Ascending aorta (tissue), 2 donors: ENCODE measurements at regions of chr6 and their contacts with region 1.

Region 1: GRCh38 chr6:11575408-11576033 is 38.0 kb downstream of the TMEM170B start:
- DNase-seq: peak in 1 of 2 donors; percentile 74
- H3K4me3 ChIP-seq: peak overlapping the region in 1 of 2 donors; percentile 23
- H3K27ac ChIP-seq: no peak overlapping the region
- H3K4me1 ChIP-seq: no peaks in the 10 kb centered on the region
- H3K27me3 ChIP-seq: no peaks in the 10 kb centered on the region
- CTCF ChIP-seq: peak; percentile 81 to 95 (median 89)

Region 2: DNA sequence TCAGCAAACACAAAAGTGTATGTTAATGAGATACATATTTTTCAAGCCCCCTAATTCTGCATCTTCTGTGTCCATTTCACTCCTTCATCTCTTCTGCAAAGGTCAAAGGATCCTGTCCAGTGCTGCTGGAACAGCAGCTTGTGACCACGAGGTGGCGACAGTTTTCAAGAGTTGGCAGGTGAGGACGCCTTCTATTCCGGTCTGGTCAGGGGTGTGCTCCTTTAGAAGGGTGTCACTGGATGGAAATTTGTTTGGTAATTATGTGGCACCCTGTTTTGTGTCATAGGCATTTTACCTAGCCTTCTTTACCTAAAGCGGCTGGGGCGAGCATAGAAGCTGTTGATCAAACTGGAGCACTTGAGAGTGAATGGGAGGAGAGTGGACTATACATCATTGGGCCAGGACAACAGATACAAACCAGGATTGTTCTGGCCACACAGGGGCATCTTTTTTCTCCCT is 431.1 kb before region 1 on chr6:
- intact Hi-C with region 1: loop called (anchors 1 kb)
- DNase-seq: peak; percentile 16 to 87
- H3K4me3 ChIP-seq: no peak overlapping the region
- H3K27ac ChIP-seq: no peak overlapping the region
- H3K4me1 ChIP-seq: no peaks in the 10 kb centered on the region
- H3K27me3 ChIP-seq: no peaks in the 10 kb centered on the region
- CTCF ChIP-seq: peak; percentile 90 to 94 (median 92)